ENCODE measurements at regions of chr15 and their contacts with region 1.

Region 1: GRCh38 chr15:40427188-40427587 is 13.6 kb upstream of the BAHD1 start:
- DNase-seq: peak in 1 of 4 donors; percentile 33
- ATAC-seq: peak; percentile 12
- H3K4me3 ChIP-seq: no peak overlapping the region
- H3K27ac ChIP-seq: no peak overlapping the region
- H3K4me1 ChIP-seq: peaks cover under 1% of the 10 kb centered on the region
- H3K27me3 ChIP-seq: no peaks in the 10 kb centered on the region
- CTCF ChIP-seq: no peak
- POLR2A ChIP-seq: no peak

Region 2: GRCh38 chr15:40354408-40355171 is 72.6 kb before region 1 on chr15:
- intact Hi-C with region 1: loop called (anchors 5 kb)
- DNase-seq: no peak
- ATAC-seq: no peak
- H3K4me3 ChIP-seq: no peak overlapping the region
- H3K27ac ChIP-seq: no peak overlapping the region
- H3K4me1 ChIP-seq: peaks cover 14% of the 10 kb centered on the region
- H3K27me3 ChIP-seq: no peaks in the 10 kb centered on the region
- CTCF ChIP-seq: peak in 1 of 7 experiments; percentile 24
- POLR2A ChIP-seq: no peak

Measured in body of pancreas (tissue), 4 donors.